ENCODE measurements at regions of chr12 and their contacts with region 1.

Region 1: GRCh38 chr12:121351820-121352681 is at the start of gene ANAPC5:
- DNase-seq: peak; percentile 96
- H3K4me3 Mint-ChIP-seq: peak within 1 kb of the TSS; percentile 90
- H3K27ac Mint-ChIP-seq: peak within 1 kb of the TSS; percentile 86
- H3K4me1 Mint-ChIP-seq: peaks cover 24% of the 10 kb centered on the region
- H3K27me3 Mint-ChIP-seq: no peaks in the 10 kb centered on the region
- total RNA-seq, gene ANAPC5: 112 to 120 TPM

Region 2: GRCh38 chr12:121296618-121297434 is 55.2 kb before region 1 on chr12 and contains the start of gene CAMKK2:
- CTCF ChIA-PET with region 1: no interaction called
- POLR2A ChIA-PET with region 1: interaction called, 5 read pairs
- intact Hi-C with region 1: loop called (anchors 2 kb)
- DNase-seq: peak; percentile 90
- H3K4me3 Mint-ChIP-seq: peak within 1 kb of the TSS; percentile 89
- H3K27ac Mint-ChIP-seq: peak within 1 kb of the TSS; percentile 65
- H3K4me1 Mint-ChIP-seq: peaks cover 18% of the 10 kb centered on the region
- H3K27me3 Mint-ChIP-seq: no peaks in the 10 kb centered on the region
- total RNA-seq, gene CAMKK2: 22.0 to 22.4 TPM